ENCODE measurements at regions of chr12 and their contacts with region 1.

Region 1: GRCh38 chr12:92244036-92244435 is 98.4 kb upstream of the BTG1 start:
- DNase-seq: no peak
- ATAC-seq: no peak
- H3K4me3 ChIP-seq: no peak overlapping the region
- H3K27ac ChIP-seq: no peak overlapping the region
- H3K4me1 ChIP-seq: no peaks in the 10 kb centered on the region
- H3K27me3 ChIP-seq: no peaks in the 10 kb centered on the region
- CTCF ChIP-seq: no peak
- POLR2A ChIP-seq: no peak
- RAD21 ChIP-seq: no peak; the same call in 1 of the 2 replicates

Region 2: GRCh38 chr12:92021665-92022033 is 222.4 kb before region 1 on chr12:
- CTCF ChIA-PET with region 1: no interaction called
- POLR2A ChIA-PET with region 1: no interaction called
- RAD21 ChIA-PET with region 1: no interaction called
- intact Hi-C with region 1: loop called (anchors 5 kb)
- DNase-seq: no peak
- ATAC-seq: no peak
- H3K4me3 ChIP-seq: no peak overlapping the region
- H3K27ac ChIP-seq: no peak overlapping the region
- H3K4me1 ChIP-seq: no peaks in the 10 kb centered on the region
- H3K27me3 ChIP-seq: no peaks in the 10 kb centered on the region
- CTCF ChIP-seq: no peak
- POLR2A ChIP-seq: no peak
- RAD21 ChIP-seq: no peak

Region 3: GRCh38 chr12:93243689-93244513 is 999.9 kb after region 1 on chr12:
- CTCF ChIA-PET with region 1: no interaction called
- POLR2A ChIA-PET with region 1: no interaction called
- RAD21 ChIA-PET with region 1: no interaction called
- intact Hi-C with region 1: no loop called
- DNase-seq: no peak
- ATAC-seq: no peak
- H3K4me3 ChIP-seq: no peak overlapping the region
- H3K27ac ChIP-seq: no peak overlapping the region
- H3K4me1 ChIP-seq: 0 out of 4 replicates have a peak, but pooled peaks cover 0 to 3% of the 10 kb centered on the region in 2 experiments
- H3K27me3 ChIP-seq: no peaks in the 10 kb centered on the region
- CTCF ChIP-seq: no peak
- POLR2A ChIP-seq: no peak
- RAD21 ChIP-seq: no peak

Measured in HCT116 (cell line).